Adrenal gland (tissue), 19 donors: ENCODE measurements at regions of chr13 and their contacts with region 1.

Region 1: GRCh38 chr13:67230404-67231288 is 510 bp upstream of the PCDH9 start:
- DNase-seq: peak; percentile 91 to 98 (median 94)
- H3K4me3 ChIP-seq: peak overlapping the region; percentile 58 to 88 (median 64)
- H3K27ac ChIP-seq: peak overlapping the region in 4 of 5 donors; percentile 58 to 88 (median 82)
- H3K4me1 ChIP-seq: peaks cover 0 to 10% of the 10 kb centered on the region in 2 donors
- H3K27me3 ChIP-seq: peaks cover 20% of the 10 kb centered on the region
- CTCF ChIP-seq: peak in 1 of 6 experiments; percentile 18
- POLR2A ChIP-seq: peak in 1 of 2 donors; percentile 13

Region 2: GRCh38 chr13:65656740-65657329 is 1573.8 kb before region 1 on chr13:
- intact Hi-C with region 1: loop called in 1 of 2 experiments (anchors 10 kb)
- DNase-seq: no peak
- H3K4me3 ChIP-seq: no peak overlapping the region
- H3K27ac ChIP-seq: no peak overlapping the region
- H3K4me1 ChIP-seq: no peaks in the 10 kb centered on the region
- H3K27me3 ChIP-seq: no peaks in the 10 kb centered on the region
- CTCF ChIP-seq: peak; percentile 26 to 61 (median 46)
- POLR2A ChIP-seq: no peak

Region 3: DNA sequence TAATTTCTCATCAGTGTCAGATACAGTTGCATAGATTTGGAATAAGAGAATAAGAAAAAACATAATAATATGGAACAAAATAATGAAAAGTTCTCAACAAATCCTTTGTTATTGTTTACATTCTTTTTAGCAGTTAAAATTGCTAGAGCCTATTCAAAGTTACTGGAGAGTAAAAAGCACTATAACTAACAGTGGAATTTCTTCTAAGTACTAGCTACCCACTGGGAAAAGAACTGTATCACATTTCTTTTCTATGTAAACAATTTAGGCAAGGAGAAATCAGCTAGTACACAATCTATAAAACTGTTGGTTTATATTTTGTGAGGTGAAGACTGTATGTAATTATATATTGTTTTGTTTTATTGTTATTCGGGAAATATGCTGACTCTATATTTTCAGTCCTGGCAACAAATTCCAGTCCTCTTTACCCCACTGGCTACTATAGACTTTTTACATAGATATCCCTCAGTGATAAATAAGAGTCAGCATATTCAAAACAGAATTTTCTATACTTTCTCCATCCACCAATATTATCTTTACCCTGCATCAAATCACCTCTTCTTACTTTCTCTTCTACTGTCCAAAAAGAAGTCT is 222.5 kb before region 1 on chr13:
- intact Hi-C with region 1: loop called in 1 of 2 experiments (anchors 5 kb)
- DNase-seq: no peak
- H3K4me3 ChIP-seq: no peak overlapping the region
- H3K27ac ChIP-seq: no peak overlapping the region
- H3K4me1 ChIP-seq: no peaks in the 10 kb centered on the region
- H3K27me3 ChIP-seq: no peaks in the 10 kb centered on the region
- CTCF ChIP-seq: no peak
- POLR2A ChIP-seq: no peak

Region 4: GRCh38 chr13:67493835-67494234 is 263.2 kb after region 1 on chr13:
- intact Hi-C with region 1: no loop called
- DNase-seq: no peak
- H3K4me3 ChIP-seq: no peak overlapping the region
- H3K27ac ChIP-seq: no peak overlapping the region
- H3K4me1 ChIP-seq: no peaks in the 10 kb centered on the region
- H3K27me3 ChIP-seq: no peaks in the 10 kb centered on the region
- CTCF ChIP-seq: no peak
- POLR2A ChIP-seq: no peak